Colonic mucosa (tissue), 4 donors: ENCODE measurements at regions of chr17 and their contacts with region 1.

Region 1: DNA sequence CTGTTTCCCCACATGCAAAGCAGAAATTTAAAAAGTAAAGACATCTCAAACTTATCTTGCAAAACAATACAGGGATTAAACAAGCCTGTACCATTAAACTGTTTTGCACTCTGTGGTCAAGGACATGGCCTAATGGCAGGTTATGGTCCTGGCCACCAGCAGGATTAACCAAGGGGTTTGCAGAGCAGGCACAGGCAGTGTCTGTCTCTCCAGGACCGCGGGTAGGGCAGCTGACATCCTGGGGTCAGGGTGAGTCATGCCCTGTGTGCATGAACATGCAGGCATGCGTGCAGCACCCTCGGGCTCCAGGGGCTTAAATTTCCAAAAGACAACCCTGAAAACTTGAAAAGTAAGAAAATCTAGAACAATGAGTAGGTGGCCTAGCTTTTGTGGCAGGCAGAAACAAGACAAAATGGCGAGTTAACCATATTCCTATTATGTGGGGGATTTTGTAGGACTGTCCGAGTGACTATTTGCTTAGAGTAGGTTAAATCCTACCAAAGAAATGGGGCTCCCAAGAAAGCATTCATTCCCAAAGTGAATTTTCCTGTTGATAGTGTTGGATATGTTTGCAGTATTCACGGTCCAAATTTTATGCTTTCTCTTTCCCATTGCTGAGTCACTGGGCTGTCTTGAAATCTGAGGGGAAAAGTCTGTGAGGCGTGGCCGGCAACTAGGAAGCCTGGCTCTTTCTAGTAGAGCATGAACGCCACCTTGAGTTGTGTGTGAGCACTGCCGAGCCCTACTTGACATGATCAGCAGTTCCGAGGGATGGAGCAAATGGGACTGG is 158.4 kb upstream of the FAM20A start:
- DNase-seq: peak; percentile 90
- H3K4me3 ChIP-seq: peak overlapping the region; percentile 16
- H3K27ac ChIP-seq: peak overlapping the region; percentile 69
- H3K4me1 ChIP-seq: no peaks in the 10 kb centered on the region
- H3K27me3 ChIP-seq: no peaks in the 10 kb centered on the region
- CTCF ChIP-seq: peak; percentile 73

Region 2: DNA sequence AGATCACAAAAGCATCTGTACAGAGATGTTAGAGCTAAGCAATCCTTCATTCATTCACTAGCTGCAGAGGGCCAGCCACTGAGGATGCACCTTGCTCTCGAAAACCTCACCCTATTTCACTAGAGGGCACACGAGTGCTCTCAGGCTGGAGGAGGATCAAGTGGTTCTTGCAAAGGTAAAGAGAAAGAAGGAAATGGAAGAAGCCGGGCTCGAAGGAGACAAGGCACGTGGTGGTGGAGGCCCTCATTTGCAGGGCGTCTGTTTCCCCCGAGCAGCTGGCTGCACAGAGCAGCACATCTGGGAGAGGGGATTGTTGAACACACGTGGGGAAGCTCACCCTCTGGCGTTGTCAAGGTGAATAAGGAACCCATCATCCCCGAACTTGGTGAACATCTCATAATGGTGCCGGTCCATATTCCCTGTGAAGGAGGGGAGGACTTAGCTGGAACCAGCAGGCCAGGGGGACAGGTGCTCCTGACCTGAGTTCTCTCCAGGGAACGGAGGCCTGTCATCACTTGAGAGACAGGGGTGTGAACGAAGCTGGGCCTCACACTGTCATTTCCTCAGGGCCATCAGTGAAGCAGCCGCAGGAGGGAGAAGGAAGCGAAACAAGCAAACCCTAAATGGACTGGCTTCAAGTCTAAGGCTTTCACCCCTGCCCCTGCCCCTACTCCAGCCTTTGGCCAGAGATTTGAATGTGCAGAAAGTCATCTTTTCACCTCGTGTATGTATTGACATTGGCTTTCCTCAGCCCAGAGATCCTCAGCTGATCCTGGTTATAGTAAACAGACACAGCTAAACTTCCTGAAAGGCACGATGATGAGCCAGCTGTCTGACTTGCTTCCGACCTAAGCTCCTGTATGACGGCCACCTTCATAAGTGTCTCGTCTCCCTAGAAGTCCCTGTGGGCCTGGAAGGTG is 219.7 kb before region 1 on chr17:
- intact Hi-C with region 1: loop called (anchors 10 kb)
- DNase-seq: no peak
- H3K4me3 ChIP-seq: no peak overlapping the region
- H3K27ac ChIP-seq: no peak overlapping the region
- H3K4me1 ChIP-seq: no peaks in the 10 kb centered on the region
- H3K27me3 ChIP-seq: no peaks in the 10 kb centered on the region
- CTCF ChIP-seq: no peak